Activated CD8-positive, alpha-beta T cell treated with anti-CD3 and anti-CD28 coated beads for 36 hours (primary cell): ENCODE measurements at regions of chr9 and their contacts with region 1.

Region 1: GRCh38 chr9:105842023-105842644 is 147.8 kb downstream of the TMEM38B start:
- DNase-seq: peak; percentile 48
- ATAC-seq: no peak
- H3K4me3 Mint-ChIP-seq: no peak overlapping the region
- H3K27ac Mint-ChIP-seq: no peak overlapping the region
- H3K4me1 Mint-ChIP-seq: no peaks in the 10 kb centered on the region
- H3K27me3 Mint-ChIP-seq: no peaks in the 10 kb centered on the region
- CTCF ChIP-seq: peak; percentile 93

Region 2: DNA sequence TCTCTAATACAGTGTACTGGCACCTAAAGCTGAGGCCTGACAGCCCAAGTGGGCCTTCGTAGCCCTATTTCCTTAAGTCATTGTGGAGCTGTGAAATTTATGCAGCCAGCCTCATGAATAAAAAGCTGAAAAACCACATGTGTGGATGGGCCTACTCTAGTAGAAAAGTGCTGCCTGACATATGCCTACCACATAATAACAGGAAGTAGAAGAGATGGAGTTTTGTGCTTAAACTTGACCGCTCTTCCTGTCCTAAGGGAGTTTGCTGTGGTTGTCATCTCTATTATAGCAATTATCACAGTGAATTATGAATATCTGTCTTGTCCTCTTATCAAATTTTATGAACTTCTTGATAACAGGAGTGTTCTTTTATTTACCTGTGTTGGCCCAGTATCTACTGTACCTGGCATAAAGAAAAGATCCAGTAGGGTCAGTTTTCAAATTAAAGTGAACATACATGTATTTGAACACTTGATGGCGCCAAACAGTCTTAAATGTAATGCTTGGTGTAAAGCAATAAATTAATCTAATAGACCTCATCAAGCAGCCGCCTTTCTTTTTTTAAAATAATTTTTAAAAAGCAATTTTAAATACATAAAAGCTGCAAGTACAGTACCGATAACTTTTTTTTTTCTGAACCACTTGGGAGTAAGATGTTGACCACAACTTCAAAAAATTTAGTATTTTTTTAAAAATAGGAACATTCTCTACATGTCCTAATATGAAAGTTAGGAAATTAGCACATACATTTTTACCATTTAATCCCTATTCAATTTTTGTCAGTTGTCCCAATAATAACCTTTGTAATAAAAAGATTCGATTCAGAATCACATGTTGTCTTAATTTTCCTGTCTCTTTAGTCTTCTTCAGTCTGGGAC is 233.2 kb before region 1 on chr9:
- CTCF ChIA-PET with region 1: no interaction called
- POLR2A ChIA-PET with region 1: no interaction called
- intact Hi-C with region 1: no loop called
- DNase-seq: no peak
- ATAC-seq: peak; percentile 58
- H3K4me3 Mint-ChIP-seq: no peak overlapping the region
- H3K27ac Mint-ChIP-seq: no peak overlapping the region
- H3K4me1 Mint-ChIP-seq: no peaks in the 10 kb centered on the region
- H3K27me3 Mint-ChIP-seq: no peaks in the 10 kb centered on the region
- CTCF ChIP-seq: peak; percentile 69

Region 3: DNA sequence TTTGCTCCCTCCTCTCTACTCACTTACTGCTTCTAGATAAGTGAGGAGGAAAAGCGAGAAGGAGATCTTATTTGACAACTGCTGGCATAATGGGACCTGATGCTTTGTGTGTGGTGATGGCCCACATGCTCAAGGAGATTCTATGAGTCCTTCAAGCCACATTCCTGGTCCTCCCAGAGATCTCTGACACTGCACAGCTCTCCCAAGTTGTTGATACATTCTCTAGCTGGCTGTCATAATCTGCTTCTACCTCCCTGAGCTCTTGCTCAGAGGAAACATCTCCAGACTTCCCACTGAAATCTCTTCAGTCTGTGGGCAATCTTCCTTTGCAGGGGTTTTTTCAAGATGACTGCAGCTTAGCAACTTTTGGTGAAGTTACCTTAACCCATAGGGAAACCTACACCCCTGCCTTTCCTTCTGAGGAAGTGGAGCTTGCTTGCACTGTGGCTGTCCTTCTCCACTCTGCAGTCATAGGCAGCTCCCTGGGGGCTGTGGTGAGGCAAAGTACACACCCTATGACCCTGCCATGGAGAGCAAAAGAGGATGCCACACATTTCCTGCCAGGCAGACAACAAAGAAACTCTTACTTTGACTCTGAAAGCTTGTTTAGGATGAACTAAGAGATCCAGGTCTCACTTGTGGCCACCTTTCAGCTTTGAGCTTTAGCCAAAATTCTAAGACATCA is 16.0 kb after region 1 on chr9:
- CTCF ChIA-PET with region 1: interaction called, 12 read pairs
- POLR2A ChIA-PET with region 1: no interaction called
- intact Hi-C with region 1: no loop called
- DNase-seq: peak; percentile 13
- ATAC-seq: peak; percentile 74
- H3K4me3 Mint-ChIP-seq: no peak overlapping the region
- H3K27ac Mint-ChIP-seq: peak overlapping the region; percentile 70
- H3K4me1 Mint-ChIP-seq: peaks cover 22% of the 10 kb centered on the region
- H3K27me3 Mint-ChIP-seq: no peaks in the 10 kb centered on the region
- CTCF ChIP-seq: no peak